Activated B cell treated with CpG ODN at 0.5 μM for 24 hours (primary cell): ENCODE measurements at regions of chr16 and their contacts with region 1.

Region 1: DNA sequence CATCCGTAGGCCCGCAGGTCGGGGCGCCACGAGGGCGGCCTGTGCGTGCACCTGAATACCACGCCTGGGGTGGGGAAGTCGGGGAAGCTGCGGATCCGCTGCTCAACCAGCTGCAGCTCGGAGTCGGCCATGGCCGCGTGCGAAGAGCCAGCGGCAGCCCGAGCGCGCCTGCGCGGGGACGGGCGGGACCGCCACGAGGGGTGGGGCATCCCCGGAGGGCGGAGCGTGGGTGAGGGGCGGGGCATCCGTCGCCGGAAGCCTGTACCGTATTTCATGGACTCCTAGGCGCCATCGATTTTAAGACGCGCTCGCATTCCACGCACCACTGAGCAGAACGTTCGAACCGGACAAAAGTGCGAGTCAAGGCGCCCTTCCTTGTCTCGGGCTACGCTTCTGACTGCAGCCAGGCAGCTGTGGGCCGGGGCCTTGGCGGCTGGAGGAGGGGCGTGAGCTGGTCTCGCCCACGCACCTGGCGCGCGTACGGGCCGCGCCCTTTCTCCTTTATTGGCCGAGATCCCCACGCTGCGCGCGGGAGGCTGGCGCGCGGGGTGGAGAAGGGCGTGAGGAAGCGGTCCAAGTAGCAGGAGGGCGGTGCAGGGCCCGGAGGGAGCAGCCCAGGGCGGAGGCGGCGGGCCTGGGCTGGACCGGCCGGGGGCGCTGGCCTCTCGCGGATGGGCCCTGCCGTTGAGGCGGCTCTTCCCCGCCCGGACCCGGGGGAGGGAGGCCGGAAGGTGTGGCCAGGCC is at the start of gene APRT:
- DNase-seq: peak; percentile 99
- ATAC-seq: peak; percentile 86
- H3K4me3 Mint-ChIP-seq: peak within 1 kb of the TSS; percentile 91
- H3K27ac Mint-ChIP-seq: peak within 1 kb of the TSS; percentile 97
- H3K4me1 Mint-ChIP-seq: peaks cover 17% of the 10 kb centered on the region
- H3K27me3 Mint-ChIP-seq: no peaks in the 10 kb centered on the region
- CTCF ChIP-seq: no peak
- total RNA-seq, gene APRT: 198 and 209 TPM in 2 replicates

Region 2: DNA sequence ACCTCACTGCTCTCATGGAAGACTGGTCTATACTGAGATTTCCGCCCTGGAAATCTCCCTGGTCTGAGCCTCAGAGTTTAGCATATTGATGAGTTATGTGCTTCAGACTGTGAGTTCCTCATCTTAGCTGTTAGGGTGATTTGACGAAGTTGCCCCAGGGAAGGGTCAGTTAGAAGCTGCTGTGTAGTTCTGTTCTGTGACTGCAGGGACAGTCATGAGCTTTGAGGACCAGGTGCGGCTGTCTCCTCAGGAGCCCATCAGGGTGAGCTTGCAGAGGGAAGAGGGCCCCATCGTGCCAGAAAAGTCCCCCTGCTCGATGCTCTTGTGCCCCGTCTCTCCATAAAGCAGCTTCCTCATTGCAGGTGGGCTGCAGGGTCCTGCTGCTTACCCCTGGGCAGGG is 201.9 kb before region 1 on chr16:
- CTCF ChIA-PET with region 1: no interaction called
- POLR2A ChIA-PET with region 1: no interaction called
- intact Hi-C with region 1: no loop called
- DNase-seq: no peak
- ATAC-seq: no peak
- H3K4me3 Mint-ChIP-seq: no peak overlapping the region
- H3K27ac Mint-ChIP-seq: no peak overlapping the region
- H3K4me1 Mint-ChIP-seq: peaks cover 18% of the 10 kb centered on the region
- H3K27me3 Mint-ChIP-seq: no peaks in the 10 kb centered on the region
- CTCF ChIP-seq: no peak

Region 3: DNA sequence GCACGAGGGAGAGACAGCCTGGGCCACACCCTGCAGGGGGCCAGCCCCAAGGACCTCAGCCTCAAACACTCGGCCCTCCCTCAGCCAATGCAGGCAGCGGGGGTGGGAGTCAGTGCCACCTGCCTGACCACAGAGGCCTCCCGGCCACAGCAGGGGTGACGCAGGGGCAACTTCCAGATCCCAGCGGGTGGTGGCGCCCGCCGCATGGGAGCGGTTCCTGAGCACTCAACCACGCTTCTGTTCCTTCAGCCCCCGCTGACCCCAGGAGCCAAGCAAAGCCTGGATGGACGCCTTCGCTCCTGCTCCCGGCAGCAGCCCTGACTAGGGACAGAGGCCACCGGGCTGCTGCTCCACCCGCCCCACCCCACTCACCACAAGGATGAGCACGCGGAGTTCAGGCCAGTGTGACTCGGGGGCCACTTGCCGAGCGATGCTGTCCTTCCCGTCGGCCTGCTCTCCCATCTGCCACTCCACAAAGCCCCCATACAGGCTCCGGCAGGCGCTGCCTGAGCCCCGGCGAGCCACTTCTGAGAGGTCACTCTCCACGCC is 156.1 kb before region 1 on chr16:
- CTCF ChIA-PET with region 1: no interaction called
- POLR2A ChIA-PET with region 1: no interaction called
- intact Hi-C with region 1: no loop called
- DNase-seq: no peak
- ATAC-seq: no peak
- H3K4me3 Mint-ChIP-seq: no peak overlapping the region
- H3K27ac Mint-ChIP-seq: no peak overlapping the region
- H3K4me1 Mint-ChIP-seq: peaks cover 20% of the 10 kb centered on the region
- H3K27me3 Mint-ChIP-seq: no peaks in the 10 kb centered on the region
- CTCF ChIP-seq: no peak

Region 4: DNA sequence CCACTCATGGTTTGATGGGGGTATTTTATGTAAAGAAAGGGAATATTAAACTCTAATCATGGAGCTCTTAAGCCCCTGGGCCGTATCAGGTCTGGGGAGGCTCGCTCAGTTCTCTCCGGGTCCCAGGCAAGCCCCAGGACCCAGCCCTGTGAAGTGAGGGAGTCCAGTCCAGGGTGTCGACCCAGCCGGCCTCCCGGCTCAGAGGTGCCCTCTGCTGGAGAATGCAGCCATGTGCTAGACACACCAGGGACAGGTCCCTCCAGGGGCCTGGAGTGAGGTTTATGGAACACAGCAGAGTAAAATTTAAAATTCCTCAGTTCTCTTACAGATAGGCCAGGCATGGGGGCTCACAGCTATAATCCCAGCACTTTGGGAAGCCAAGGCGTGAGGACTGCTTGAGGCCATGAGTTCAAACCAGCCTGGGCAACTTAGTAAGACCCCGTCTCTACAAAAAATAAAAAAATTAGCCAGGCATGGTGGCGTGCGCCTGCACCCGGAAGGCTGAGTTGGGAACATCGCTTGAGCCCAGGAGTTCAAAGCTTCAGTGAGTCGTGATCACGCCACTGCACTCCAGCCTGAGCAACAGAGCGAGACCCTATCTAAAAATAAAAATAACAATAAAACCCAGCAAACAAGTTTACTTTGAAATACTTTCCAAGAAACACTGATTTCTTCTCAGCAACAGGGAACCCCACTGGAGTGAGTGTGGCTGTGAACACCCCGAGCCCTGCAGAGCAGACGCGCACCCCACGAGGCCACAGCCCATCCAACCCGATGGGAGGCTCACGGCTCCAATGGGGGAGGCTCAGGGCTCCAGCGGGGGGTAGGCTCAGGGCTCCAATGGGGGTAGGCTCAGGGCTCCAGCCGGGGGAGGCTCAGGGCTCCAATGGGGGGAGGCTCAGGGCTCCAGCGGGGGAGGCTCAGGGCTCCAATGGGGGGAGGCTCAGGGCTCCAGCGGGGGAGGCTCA is 477.8 kb after region 1 on chr16:
- CTCF ChIA-PET with region 1: no interaction called
- POLR2A ChIA-PET with region 1: no interaction called
- intact Hi-C with region 1: loop called (anchors 1 kb)
- DNase-seq: peak; percentile 53
- ATAC-seq: peak; percentile 91
- H3K4me3 Mint-ChIP-seq: no peak overlapping the region
- H3K27ac Mint-ChIP-seq: no peak overlapping the region
- H3K4me1 Mint-ChIP-seq: peaks cover 4% of the 10 kb centered on the region
- H3K27me3 Mint-ChIP-seq: no peaks in the 10 kb centered on the region
- CTCF ChIP-seq: peak; percentile 48